ENCODE measurements at regions of chr4 and their contacts with region 1.

Region 1: DNA sequence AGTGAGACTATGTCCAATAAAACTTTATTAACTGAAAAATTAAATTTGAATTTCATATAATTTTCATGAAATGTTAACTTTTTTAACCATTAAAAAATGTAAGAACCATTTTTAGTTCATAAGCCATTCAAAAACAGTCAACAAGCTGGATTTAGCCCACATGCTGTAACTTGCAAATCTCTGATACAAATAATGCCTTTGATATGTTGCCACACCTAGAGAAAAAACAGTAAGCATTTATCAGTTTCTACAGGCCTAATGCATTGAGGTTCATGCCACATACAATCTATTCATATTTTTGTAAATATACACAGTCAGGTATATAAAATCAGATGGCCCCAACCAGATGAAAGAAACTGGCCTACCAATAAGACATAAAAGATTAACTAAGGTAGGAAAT is 52.8 kb downstream of the LCORL start:
- DNase-seq: no peak
- ATAC-seq: no peak
- H3K4me3 Mint-ChIP-seq: no peak overlapping the region
- H3K27ac Mint-ChIP-seq: no peak overlapping the region
- H3K4me1 Mint-ChIP-seq: peaks cover 1% of the 10 kb centered on the region
- H3K27me3 Mint-ChIP-seq: no peaks in the 10 kb centered on the region
- CTCF ChIP-seq: no peak

Region 2: DNA sequence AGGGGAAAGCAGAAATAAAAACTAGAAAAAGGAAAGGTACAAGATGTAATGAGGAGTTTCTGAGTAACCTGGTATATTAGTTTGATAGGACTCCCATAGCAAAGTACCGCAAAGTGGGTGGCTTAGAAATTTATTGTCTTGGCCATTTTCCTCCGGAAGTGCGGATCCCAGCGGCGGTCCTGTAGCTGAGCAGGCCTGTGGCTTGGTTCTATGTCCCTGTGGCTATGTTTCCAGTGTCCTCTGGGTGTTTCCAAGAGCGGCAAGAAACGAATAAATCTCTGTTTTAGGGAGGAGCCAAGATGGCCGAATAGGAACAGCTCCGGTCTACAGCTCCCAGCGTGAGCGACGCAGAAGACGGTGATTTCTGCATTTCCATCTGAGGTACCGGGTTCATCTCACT is 1026.2 kb before region 1 on chr4:
- CTCF ChIA-PET with region 1: no interaction called
- POLR2A ChIA-PET with region 1: no interaction called
- intact Hi-C with region 1: no loop called
- DNase-seq: no peak
- ATAC-seq: no peak
- H3K4me3 Mint-ChIP-seq: no peak overlapping the region
- H3K27ac Mint-ChIP-seq: no peak overlapping the region
- H3K4me1 Mint-ChIP-seq: no peaks in the 10 kb centered on the region
- H3K27me3 Mint-ChIP-seq: no peaks in the 10 kb centered on the region
- CTCF ChIP-seq: no peak

Region 3: GRCh38 chr4:18012134-18012806 is 43.5 kb after region 1 on chr4:
- CTCF ChIA-PET with region 1: no interaction called
- POLR2A ChIA-PET with region 1: no interaction called
- intact Hi-C with region 1: loop called (anchors 5 kb)
- DNase-seq: no peak
- ATAC-seq: no peak
- H3K4me3 Mint-ChIP-seq: no peak overlapping the region
- H3K27ac Mint-ChIP-seq: no peak overlapping the region
- H3K4me1 Mint-ChIP-seq: peaks cover 47% of the 10 kb centered on the region
- H3K27me3 Mint-ChIP-seq: no peaks in the 10 kb centered on the region
- CTCF ChIP-seq: no peak

Measured in activated B cell treated with CpG ODN at 0.5 μM for 24 hours (primary cell).